ENCODE measurements at regions of chr15 and their contacts with region 1.

Region 1: DNA sequence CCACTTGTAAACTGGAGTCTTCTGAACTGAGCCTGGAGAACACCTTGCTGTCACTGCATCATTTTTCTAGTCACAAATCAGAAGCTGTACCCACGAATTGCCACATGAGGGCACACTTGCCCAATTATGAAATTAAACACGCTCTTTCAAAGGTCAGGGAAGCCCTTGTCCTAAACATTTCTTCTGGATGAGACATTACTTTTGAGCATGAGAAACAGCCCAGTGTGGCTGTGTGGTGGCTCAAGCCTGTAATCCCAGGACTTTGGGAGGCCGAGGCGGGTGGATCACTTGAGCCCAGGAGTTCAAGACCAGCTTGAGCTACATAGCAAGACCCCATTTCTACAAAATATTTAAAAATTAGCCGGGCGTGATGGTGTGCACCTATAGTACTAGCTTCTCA is 27.5 kb upstream of the CFAP161 start:
- DNase-seq: peak; percentile 59
- H3K4me3 Mint-ChIP-seq: no peak overlapping the region
- H3K27ac Mint-ChIP-seq: no peak overlapping the region
- H3K4me1 Mint-ChIP-seq: peaks cover 3% of the 10 kb centered on the region
- H3K27me3 Mint-ChIP-seq: peaks cover 20% of the 10 kb centered on the region

Region 2: DNA sequence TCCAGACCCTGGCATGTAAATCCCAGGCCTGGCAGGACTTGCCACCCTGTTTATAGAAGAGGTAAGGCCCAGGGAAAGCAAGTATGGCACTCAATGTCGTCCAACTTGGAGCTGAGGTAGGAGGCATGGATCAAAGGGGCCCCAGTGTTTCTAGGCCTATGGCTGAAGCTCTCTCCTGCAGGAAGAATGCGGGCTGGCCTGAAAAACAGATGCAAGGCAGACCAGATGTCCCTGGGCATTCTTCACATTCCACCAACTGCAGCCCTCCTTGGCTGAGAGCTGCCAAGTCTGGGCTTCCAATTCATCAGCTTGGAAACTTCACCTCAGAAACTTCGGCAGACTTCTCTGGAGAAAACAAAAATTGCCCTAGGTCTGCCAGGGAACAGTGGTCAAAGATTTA is 139.1 kb before region 1 on chr15:
- CTCF ChIA-PET with region 1: no interaction called
- POLR2A ChIA-PET with region 1: no interaction called
- intact Hi-C with region 1: no loop called
- DNase-seq: no peak
- H3K4me3 Mint-ChIP-seq: no peak overlapping the region
- H3K27ac Mint-ChIP-seq: no peak overlapping the region
- H3K4me1 Mint-ChIP-seq: peaks cover 11% of the 10 kb centered on the region
- H3K27me3 Mint-ChIP-seq: no peaks in the 10 kb centered on the region

Region 3: DNA sequence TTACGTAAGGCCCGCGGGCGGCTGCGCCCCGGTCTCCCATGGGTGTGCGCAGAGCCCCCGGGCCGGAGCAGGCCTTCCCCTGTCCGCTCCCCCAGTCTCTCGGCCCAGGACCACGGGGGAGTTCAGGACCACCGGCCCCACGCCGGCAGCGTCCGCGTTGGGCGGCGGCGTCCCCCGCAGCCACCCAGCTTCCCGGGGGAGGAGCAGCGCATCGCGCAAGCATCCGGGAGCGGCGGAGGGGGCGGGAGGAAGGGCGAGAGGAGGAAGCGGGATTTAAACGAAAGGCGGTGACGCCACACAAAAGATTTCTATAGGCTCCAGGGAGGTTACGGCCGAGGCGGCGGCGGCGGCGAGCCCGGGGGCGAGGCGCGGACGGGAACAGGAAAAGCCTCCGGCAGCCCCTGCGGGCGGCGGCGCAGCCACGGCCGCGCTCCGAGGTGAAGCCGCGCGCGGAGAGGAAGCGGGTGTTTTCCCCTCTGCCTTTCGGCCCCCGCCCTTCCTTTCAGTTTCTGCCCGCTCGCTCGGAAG is 105.9 kb before region 1 on chr15 and contains the start of gene TLNRD1:
- CTCF ChIA-PET with region 1: interaction called, 5 read pairs
- POLR2A ChIA-PET with region 1: no interaction called
- intact Hi-C with region 1: loop called (anchors 1 kb)
- DNase-seq: peak; percentile 92
- H3K4me3 Mint-ChIP-seq: peak within 1 kb of the TSS; percentile 97
- H3K27ac Mint-ChIP-seq: peak within 1 kb of the TSS; percentile 99
- H3K4me1 Mint-ChIP-seq: peaks cover 42% of the 10 kb centered on the region
- H3K27me3 Mint-ChIP-seq: no peaks in the 10 kb centered on the region
- total RNA-seq, gene TLNRD1: 23.5 to 25.4 TPM

Region 4: DNA sequence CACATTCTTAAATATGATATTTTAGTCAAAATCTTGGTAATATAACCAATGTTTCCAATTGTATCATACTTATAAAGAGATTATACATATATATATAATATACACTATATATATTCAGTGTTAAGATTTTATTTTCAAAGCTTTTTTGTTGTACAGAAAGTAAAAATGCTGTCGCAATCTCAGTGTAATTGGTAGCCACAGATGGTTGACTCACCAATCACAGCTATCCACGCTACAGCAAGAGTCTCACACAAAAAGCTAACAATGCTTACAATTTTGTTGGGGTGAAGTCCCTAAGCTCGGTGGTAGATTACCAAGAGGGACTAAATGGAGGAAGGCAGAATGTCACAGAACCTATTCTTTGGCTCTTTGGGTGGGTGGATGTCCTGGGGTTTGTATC is 10.6 kb after region 1 on chr15:
- CTCF ChIA-PET with region 1: interaction called, 10 read pairs
- POLR2A ChIA-PET with region 1: no interaction called
- intact Hi-C with region 1: no loop called
- DNase-seq: no peak
- H3K4me3 Mint-ChIP-seq: no peak overlapping the region
- H3K27ac Mint-ChIP-seq: no peak overlapping the region
- H3K4me1 Mint-ChIP-seq: no peaks in the 10 kb centered on the region
- H3K27me3 Mint-ChIP-seq: peaks cover 32% of the 10 kb centered on the region

Region 5: GRCh38 chr15:81239190-81239589 is 132.6 kb after region 1 on chr15:
- CTCF ChIA-PET with region 1: no interaction called
- POLR2A ChIA-PET with region 1: no interaction called
- intact Hi-C with region 1: no loop called
- DNase-seq: no peak
- H3K4me3 Mint-ChIP-seq: no peak overlapping the region
- H3K27ac Mint-ChIP-seq: no peak overlapping the region
- H3K4me1 Mint-ChIP-seq: no peaks in the 10 kb centered on the region
- H3K27me3 Mint-ChIP-seq: no peaks in the 10 kb centered on the region